OCI-LY7 (cell line): ENCODE measurements at regions of chr4 and their contacts with region 1.

Region 1: GRCh38 chr4:132513491-132513890 is 635.6 kb upstream of the PCDH10 start:
- DNase-seq: no peak
- H3K4me3 ChIP-seq: no peak overlapping the region
- H3K27ac ChIP-seq: no peak overlapping the region
- H3K4me1 ChIP-seq: peaks cover 12% of the 10 kb centered on the region
- CTCF ChIP-seq: no peak

Region 2: GRCh38 chr4:132527817-132528216 is 14.3 kb after region 1 on chr4:
- CTCF ChIA-PET with region 1: no interaction called
- POLR2A ChIA-PET with region 1: interaction called, 16 read pairs
- intact Hi-C with region 1: no loop called
- DNase-seq: no peak
- H3K4me3 ChIP-seq: no peak overlapping the region
- H3K27ac ChIP-seq: no peak overlapping the region
- H3K4me1 ChIP-seq: peaks cover 29% of the 10 kb centered on the region
- CTCF ChIP-seq: no peak